ENCODE measurements at regions of chr11 and their contacts with region 1.

Region 1: GRCh38 chr11:57493507-57494503 is 21.7 kb downstream of the SLC43A1 start:
- DNase-seq: peak; percentile 76 to 84
- H3K4me3 ChIP-seq: no peak overlapping the region
- H3K27ac ChIP-seq: peak overlapping the region; percentile 79
- H3K4me1 ChIP-seq: peaks cover 30% of the 10 kb centered on the region
- H3K27me3 ChIP-seq: no peaks in the 10 kb centered on the region
- CTCF ChIP-seq: peak; percentile 99

Region 2: GRCh38 chr11:57456960-57457642 is 36.7 kb before region 1 on chr11:
- CTCF ChIA-PET with region 1: interaction called, 20 read pairs
- POLR2A ChIA-PET with region 1: no interaction called
- intact Hi-C with region 1: no loop called
- DNase-seq: peak; percentile 74 to 90
- H3K4me3 ChIP-seq: no peak overlapping the region
- H3K27ac ChIP-seq: no peak overlapping the region
- H3K4me1 ChIP-seq: peaks cover 22% of the 10 kb centered on the region
- H3K27me3 ChIP-seq: peaks cover 22% of the 10 kb centered on the region
- CTCF ChIP-seq: peak; percentile 100

Region 3: DNA sequence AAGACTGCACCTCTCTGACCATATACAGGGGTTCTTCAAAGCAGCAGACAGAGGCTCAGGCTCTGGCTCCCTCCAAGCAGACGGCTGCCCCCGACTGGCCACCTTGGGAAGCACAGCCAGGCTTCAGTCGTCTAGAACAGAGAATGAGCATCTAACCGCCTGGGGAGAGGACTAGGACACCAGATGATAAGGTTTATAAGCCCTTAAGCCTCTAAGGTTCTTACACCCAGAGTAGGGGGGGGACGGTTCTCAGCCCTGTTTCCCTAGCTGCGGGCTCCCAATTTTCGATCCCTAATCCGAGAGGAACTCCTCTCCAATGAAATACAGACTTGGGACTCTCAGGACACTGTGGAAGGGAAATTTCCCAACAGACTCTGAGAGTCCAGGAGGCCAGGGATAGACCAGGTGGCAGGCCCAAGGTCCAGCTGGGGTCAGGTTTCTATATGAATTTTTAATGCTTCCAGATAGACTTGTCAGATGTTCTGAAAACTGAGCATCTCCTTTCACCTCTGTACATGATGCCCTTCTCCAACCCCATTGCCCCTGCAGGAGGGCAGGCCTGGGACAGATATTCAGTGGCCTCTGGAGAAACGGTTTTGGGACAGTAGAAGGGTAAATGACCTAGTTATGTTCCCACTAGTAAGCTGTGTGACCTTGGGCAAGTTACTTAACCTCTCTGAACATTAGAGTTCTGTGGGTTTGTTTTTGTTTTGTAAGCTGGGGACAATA is 13.2 kb before region 1 on chr11:
- CTCF ChIA-PET with region 1: interaction called, 31 read pairs
- POLR2A ChIA-PET with region 1: no interaction called
- intact Hi-C with region 1: no loop called
- DNase-seq: peak; percentile 62 to 69
- H3K4me3 ChIP-seq: no peak overlapping the region
- H3K27ac ChIP-seq: no peak overlapping the region
- H3K4me1 ChIP-seq: peaks cover 6% of the 10 kb centered on the region; the same call in 1 of the 2 replicates
- H3K27me3 ChIP-seq: peaks cover 28% of the 10 kb centered on the region
- CTCF ChIP-seq: peak; percentile 90

Region 4: DNA sequence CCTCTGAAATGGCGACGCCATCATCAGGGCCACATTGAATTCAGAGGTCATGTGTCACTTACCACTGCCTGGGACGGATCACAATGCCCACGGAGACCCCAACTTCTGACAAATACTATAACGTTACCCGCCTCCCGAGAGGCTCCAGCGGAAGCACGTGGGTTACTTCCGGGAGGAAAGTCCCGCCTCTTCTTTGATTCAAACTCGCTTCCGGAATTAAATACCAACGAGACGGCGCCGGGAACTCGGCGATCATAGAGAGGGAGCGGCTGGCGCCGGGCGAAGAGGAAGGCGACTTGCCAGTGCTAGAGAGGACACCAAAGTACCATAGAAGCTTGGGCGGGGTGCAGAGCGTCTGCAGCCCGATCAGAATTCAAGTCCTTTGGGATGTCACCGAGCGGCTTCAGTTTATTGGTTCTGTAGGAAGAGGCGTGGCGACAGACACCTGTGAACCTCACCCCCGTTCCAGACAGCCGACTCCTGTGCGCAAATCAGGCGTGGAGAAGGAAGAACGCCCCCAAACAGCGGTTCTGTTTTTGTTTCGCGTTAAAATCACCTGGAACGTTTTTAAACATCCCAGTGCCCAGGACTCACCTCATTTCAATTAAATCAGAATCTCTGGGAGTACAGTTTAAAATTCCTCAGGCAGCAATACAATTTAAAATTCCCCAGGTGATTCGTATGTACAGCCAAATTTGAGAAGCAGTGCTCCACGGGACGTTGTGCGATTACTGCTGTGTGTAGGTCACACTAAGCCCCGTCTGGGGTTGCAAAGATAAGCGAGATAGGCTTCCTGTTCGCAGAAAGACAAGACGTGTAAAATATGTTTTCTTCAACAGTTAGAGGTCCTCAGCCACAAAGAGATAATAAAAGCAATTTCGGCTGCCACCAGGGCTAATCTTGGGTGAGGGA is 37.0 kb after region 1 on chr11 and contains the start of gene TIMM10:
- CTCF ChIA-PET with region 1: interaction called, 48 read pairs
- POLR2A ChIA-PET with region 1: no interaction called
- intact Hi-C with region 1: loop called (anchors 1 kb)
- DNase-seq: peak; percentile 98 to 99
- H3K4me3 ChIP-seq: peak within 1 kb of the TSS; percentile 83
- H3K27ac ChIP-seq: peak within 1 kb of the TSS; percentile 48
- H3K4me1 ChIP-seq: peaks cover 27% of the 10 kb centered on the region
- H3K27me3 ChIP-seq: peaks cover 4% of the 10 kb centered on the region; the same call in 1 of the 2 replicates
- CTCF ChIP-seq: peak; percentile 23; the same call in 1 of the 2 replicates
- total RNA-seq, gene TIMM10: 90.2 and 94.7 TPM in 2 replicates

Region 5: GRCh38 chr11:57644748-57645688 is 151.2 kb after region 1 on chr11:
- CTCF ChIA-PET with region 1: interaction called, 26 read pairs
- POLR2A ChIA-PET with region 1: interaction called, 3 read pairs
- intact Hi-C with region 1: loop called (anchors 1 kb)
- DNase-seq: peak; percentile 60 to 83
- H3K4me3 ChIP-seq: no peak overlapping the region
- H3K27ac ChIP-seq: no peak overlapping the region
- H3K4me1 ChIP-seq: peaks cover 3% of the 10 kb centered on the region; the same call in 1 of the 2 replicates
- H3K27me3 ChIP-seq: peaks cover 46% of the 10 kb centered on the region
- CTCF ChIP-seq: peak; percentile 98